Naive thymus-derived CD4-positive, alpha-beta T cell (primary cell): ENCODE measurements at regions of chr15 and their contacts with region 1.

Region 1: GRCh38 chr15:41904541-41905005 is 10.7 kb upstream of the SPTBN5 start:
- DNase-seq: peak; percentile 54 to 76 (median 64)
- ATAC-seq: peak; percentile 89
- H3K4me3 ChIP-seq: no peak overlapping the region
- H3K4me3 Mint-ChIP-seq: no peak overlapping the region
- H3K27ac ChIP-seq: no peak overlapping the region
- H3K27ac Mint-ChIP-seq: peak overlapping the region; percentile 9 to 90 (median 62)
- H3K4me1 ChIP-seq: peaks cover 0 to 9% of the 10 kb centered on the region in 2 donors
- H3K4me1 Mint-ChIP-seq: peaks cover 2 to 14% (median 6%) of the 10 kb centered on the region in 7 donors
- H3K27me3 ChIP-seq: no peaks in the 10 kb centered on the region
- H3K27me3 Mint-ChIP-seq: no peaks in the 10 kb centered on the region

Region 2: GRCh38 chr15:41465822-41466421 is 438.7 kb before region 1 on chr15:
- CTCF ChIA-PET with region 1: no interaction called
- POLR2A ChIA-PET with region 1: no interaction called
- intact Hi-C with region 1: loop called in 1 of 2 experiments (anchors 10 kb)
- DNase-seq: peak in 6 of 9 donors; percentile 12 to 43 (median 32)
- ATAC-seq: peak; percentile 75
- H3K4me3 ChIP-seq: no peak overlapping the region
- H3K4me3 Mint-ChIP-seq: no peak overlapping the region
- H3K27ac ChIP-seq: no peak overlapping the region
- H3K27ac Mint-ChIP-seq: peak overlapping the region in 2 of 9 donors; percentile 16 to 63
- H3K4me1 ChIP-seq: no peaks in the 10 kb centered on the region
- H3K4me1 Mint-ChIP-seq: peaks cover 0 to 7% (median 4%) of the 10 kb centered on the region in 7 donors
- H3K27me3 ChIP-seq: no peaks in the 10 kb centered on the region
- H3K27me3 Mint-ChIP-seq: no peaks in the 10 kb centered on the region

Region 3: GRCh38 chr15:41695750-41696426 is 208.7 kb before region 1 on chr15:
- CTCF ChIA-PET with region 1: interaction called, 4 read pairs
- POLR2A ChIA-PET with region 1: no interaction called
- intact Hi-C with region 1: loop called (anchors 1 to 2 kb)
- DNase-seq: peak in 7 of 9 donors; percentile 22 to 56 (median 44)
- ATAC-seq: peak; percentile 97
- H3K4me3 ChIP-seq: no peak overlapping the region
- H3K4me3 Mint-ChIP-seq: peak overlapping the region; percentile 3 to 69 (median 56)
- H3K27ac ChIP-seq: peak overlapping the region; percentile 42
- H3K27ac Mint-ChIP-seq: peak overlapping the region; percentile 22 to 81 (median 67)
- H3K4me1 ChIP-seq: peaks cover 0 to 10% of the 10 kb centered on the region in 2 donors
- H3K4me1 Mint-ChIP-seq: peaks cover 25 to 74% (median 59%) of the 10 kb centered on the region in 7 donors
- H3K27me3 ChIP-seq: no peaks in the 10 kb centered on the region
- H3K27me3 Mint-ChIP-seq: no peaks in the 10 kb centered on the region

Region 4: DNA sequence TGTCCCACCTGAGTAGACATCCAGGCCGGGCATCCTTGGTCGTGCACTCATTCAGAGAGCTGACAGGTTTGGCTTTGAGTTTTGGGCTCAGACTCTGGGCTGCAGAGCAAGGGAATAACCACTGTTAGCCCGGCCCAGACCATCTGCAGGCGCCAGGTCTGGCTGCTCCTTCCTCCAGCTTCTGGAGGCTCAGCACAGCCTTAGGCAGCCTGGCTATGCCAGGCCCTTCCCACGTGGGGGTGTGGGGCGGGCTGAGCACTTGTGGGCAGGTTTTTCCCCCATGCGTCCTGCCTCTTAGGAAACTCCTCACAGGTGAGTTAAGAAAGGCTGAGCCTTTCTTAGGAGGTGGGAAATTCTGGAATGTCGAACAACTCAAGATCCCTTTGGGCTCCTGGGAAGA is 54.7 kb before region 1 on chr15:
- CTCF ChIA-PET with region 1: interaction called, 6 read pairs
- POLR2A ChIA-PET with region 1: no interaction called
- intact Hi-C with region 1: loop called in 1 of 2 experiments (anchors 5 kb)
- DNase-seq: no peak
- ATAC-seq: no peak
- H3K4me3 ChIP-seq: no peak overlapping the region
- H3K4me3 Mint-ChIP-seq: no peak overlapping the region
- H3K27ac ChIP-seq: no peak overlapping the region
- H3K27ac Mint-ChIP-seq: peak overlapping the region in 2 of 9 donors; percentile 32 to 71
- H3K4me1 ChIP-seq: no peaks in the 10 kb centered on the region
- H3K4me1 Mint-ChIP-seq: no peaks in the 10 kb centered on the region
- H3K27me3 ChIP-seq: no peaks in the 10 kb centered on the region
- H3K27me3 Mint-ChIP-seq: no peaks in the 10 kb centered on the region

Region 5: DNA sequence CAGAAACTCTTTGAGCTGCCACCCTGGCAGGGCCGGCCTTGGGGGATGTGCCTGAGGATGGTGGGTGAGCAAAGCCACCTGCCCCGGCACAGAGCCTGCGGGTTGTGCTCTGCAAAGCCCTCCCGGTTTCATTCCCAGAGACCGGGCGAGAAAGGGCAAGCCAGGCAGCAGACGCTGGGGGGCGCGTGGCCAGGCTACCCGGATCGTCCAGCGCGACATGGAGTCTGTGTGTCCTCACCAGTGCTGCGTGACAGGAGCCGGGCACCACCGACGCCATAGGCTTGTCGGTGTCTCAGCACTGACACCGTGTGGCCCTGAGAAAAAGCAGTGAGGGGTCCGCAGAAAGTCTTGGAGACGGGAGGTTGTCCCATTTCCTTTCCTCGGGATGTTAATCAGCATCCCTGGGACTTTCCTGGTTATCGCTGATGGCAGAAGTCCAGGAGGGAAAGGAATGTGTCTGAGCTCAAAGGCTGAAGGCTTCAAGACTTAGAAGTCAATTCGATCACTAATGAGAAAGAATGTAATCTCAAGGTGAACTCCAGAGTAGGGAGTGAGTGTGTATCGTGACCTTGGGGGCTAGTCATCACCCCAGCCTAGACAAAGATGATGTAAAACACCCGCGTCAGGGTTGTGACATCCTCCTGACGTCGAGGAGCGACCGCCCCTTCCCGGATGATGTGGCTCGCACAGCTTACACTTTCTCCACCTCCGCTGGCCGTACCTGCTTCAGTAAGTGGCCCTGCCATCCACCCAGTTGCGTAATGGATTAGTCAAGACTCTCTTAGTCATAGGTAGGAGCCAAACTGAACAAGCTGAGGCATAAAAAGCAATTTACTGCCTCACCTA is 152.6 kb after region 1 on chr15:
- CTCF ChIA-PET with region 1: no interaction called
- POLR2A ChIA-PET with region 1: no interaction called
- intact Hi-C with region 1: loop called in 1 of 2 experiments (anchors 2 kb)
- DNase-seq: peak; percentile 19 to 56 (median 30)
- ATAC-seq: peak; percentile 81
- H3K4me3 ChIP-seq: peak overlapping the region; percentile 23
- H3K4me3 Mint-ChIP-seq: peak overlapping the region; percentile 39 to 79 (median 60)
- H3K27ac ChIP-seq: no peak overlapping the region
- H3K27ac Mint-ChIP-seq: peak overlapping the region in 4 of 9 donors; percentile 24 to 77 (median 35)
- H3K4me1 ChIP-seq: no peaks in the 10 kb centered on the region
- H3K4me1 Mint-ChIP-seq: peaks cover 3 to 17% (median 10%) of the 10 kb centered on the region in 7 donors
- H3K27me3 ChIP-seq: peaks cover 0 to 12% of the 10 kb centered on the region in 2 donors
- H3K27me3 Mint-ChIP-seq: peaks cover 11 to 59% (median 27%) of the 10 kb centered on the region in 5 donors

Region 6: GRCh38 chr15:42483677-42484076 is 579.1 kb after region 1 on chr15:
- CTCF ChIA-PET with region 1: no interaction called
- POLR2A ChIA-PET with region 1: no interaction called
- intact Hi-C with region 1: no loop called
- DNase-seq: no peak
- ATAC-seq: no peak
- H3K4me3 ChIP-seq: no peak overlapping the region
- H3K4me3 Mint-ChIP-seq: no peak overlapping the region
- H3K27ac ChIP-seq: no peak overlapping the region
- H3K27ac Mint-ChIP-seq: peak overlapping the region in 2 of 9 donors; percentile 44 to 64
- H3K4me1 ChIP-seq: no peaks in the 10 kb centered on the region
- H3K4me1 Mint-ChIP-seq: peaks cover 14 to 32% (median 27%) of the 10 kb centered on the region in 7 donors
- H3K27me3 ChIP-seq: no peaks in the 10 kb centered on the region
- H3K27me3 Mint-ChIP-seq: no peaks in the 10 kb centered on the region

Region 7: GRCh38 chr15:42495361-42496212 is 591.0 kb after region 1 on chr15 and contains the start of gene SNAP23:
- CTCF ChIA-PET with region 1: no interaction called
- POLR2A ChIA-PET with region 1: no interaction called
- intact Hi-C with region 1: no loop called
- DNase-seq: peak; percentile 66 to 87 (median 80)
- ATAC-seq: peak; percentile 93
- H3K4me3 ChIP-seq: peak within 1 kb of the TSS; percentile 88
- H3K4me3 Mint-ChIP-seq: peak within 1 kb of the TSS; percentile 94 to 99 (median 97)
- H3K27ac ChIP-seq: peak within 1 kb of the TSS; percentile 79
- H3K27ac Mint-ChIP-seq: peak within 1 kb of the TSS; percentile 90 to 99 (median 96)
- H3K4me1 ChIP-seq: peaks cover 14 to 17% of the 10 kb centered on the region in 2 donors
- H3K4me1 Mint-ChIP-seq: peaks cover 43 to 92% (median 80%) of the 10 kb centered on the region in 7 donors
- H3K27me3 ChIP-seq: no peaks in the 10 kb centered on the region
- H3K27me3 Mint-ChIP-seq: peaks cover 0 to 2% (median 0%) of the 10 kb centered on the region in 5 donors
- total RNA-seq, gene SNAP23: 60.0 to 80.0 (median 70.6) TPM